Activated CD8-positive, alpha-beta T cell treated with anti-CD3 and anti-CD28 coated beads for 36 hours (primary cell): ENCODE measurements at regions of chr4 and their contacts with region 1.

Region 1: GRCh38 chr4:48033825-48034413 is 17.3 kb downstream of the NIPAL1 start:
- DNase-seq: peak; percentile 88
- ATAC-seq: peak; percentile 72
- H3K4me3 Mint-ChIP-seq: no peak overlapping the region
- H3K27ac Mint-ChIP-seq: no peak overlapping the region
- H3K4me1 Mint-ChIP-seq: peaks cover 60% of the 10 kb centered on the region
- H3K27me3 Mint-ChIP-seq: peaks cover 2% of the 10 kb centered on the region
- CTCF ChIP-seq: peak; percentile 87

Region 2: DNA sequence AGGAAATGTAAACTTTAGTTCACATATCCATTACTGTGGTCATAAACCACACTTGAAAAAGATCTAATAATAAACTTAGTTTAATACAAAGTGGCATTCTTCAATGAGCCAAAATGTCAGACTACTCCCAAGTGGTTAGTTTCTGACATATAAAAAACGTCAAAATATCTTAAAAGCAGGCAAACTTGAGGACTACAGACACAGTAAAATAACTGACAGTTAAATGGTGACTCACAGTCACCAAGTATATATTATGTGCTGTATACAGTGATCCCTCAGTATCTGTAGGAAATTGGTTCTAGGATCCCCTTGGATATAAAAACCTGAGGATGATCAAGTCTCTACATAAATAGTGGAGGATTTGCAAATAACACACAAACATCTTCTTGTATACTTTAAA is 184.5 kb before region 1 on chr4:
- CTCF ChIA-PET with region 1: no interaction called
- POLR2A ChIA-PET with region 1: no interaction called
- intact Hi-C with region 1: no loop called
- DNase-seq: no peak
- ATAC-seq: no peak
- H3K4me3 Mint-ChIP-seq: no peak overlapping the region
- H3K27ac Mint-ChIP-seq: no peak overlapping the region
- H3K4me1 Mint-ChIP-seq: no peaks in the 10 kb centered on the region
- H3K27me3 Mint-ChIP-seq: no peaks in the 10 kb centered on the region
- CTCF ChIP-seq: no peak

Region 3: DNA sequence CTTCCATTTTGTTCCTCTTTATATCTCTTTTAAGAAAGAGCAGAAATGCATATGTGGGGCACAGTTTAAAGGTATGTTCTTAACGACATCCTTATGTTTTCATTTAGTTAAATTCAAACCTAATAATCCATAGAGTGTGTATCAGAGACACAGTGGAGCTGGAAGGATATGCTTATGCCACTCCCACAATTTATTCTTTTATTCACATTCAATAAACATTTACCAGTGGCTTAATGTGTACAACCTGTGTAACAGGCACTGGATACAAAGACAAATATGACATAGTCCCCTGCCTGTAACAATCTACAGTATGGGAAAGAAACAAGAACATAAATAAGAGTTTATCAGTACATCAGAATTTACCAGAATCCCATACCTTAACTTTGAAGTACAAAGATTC is 173.6 kb before region 1 on chr4:
- CTCF ChIA-PET with region 1: no interaction called
- POLR2A ChIA-PET with region 1: no interaction called
- intact Hi-C with region 1: no loop called
- DNase-seq: no peak
- ATAC-seq: no peak
- H3K4me3 Mint-ChIP-seq: no peak overlapping the region
- H3K27ac Mint-ChIP-seq: no peak overlapping the region
- H3K4me1 Mint-ChIP-seq: peaks cover 2% of the 10 kb centered on the region
- H3K27me3 Mint-ChIP-seq: no peaks in the 10 kb centered on the region
- CTCF ChIP-seq: no peak

Region 4: GRCh38 chr4:48016141-48017103 is 17.5 kb before region 1 on chr4 and contains the starts of genes CNGA1 and NIPAL1:
- CTCF ChIA-PET with region 1: interaction called, 44 read pairs
- POLR2A ChIA-PET with region 1: interaction called, 5 read pairs
- intact Hi-C with region 1: no loop called
- DNase-seq: peak; percentile 69
- ATAC-seq: peak; percentile 89
- H3K4me3 Mint-ChIP-seq: peak within 1 kb of the TSS; percentile 79
- H3K27ac Mint-ChIP-seq: peak within 1 kb of the TSS; percentile 42
- H3K4me1 Mint-ChIP-seq: peaks cover 23% of the 10 kb centered on the region
- H3K27me3 Mint-ChIP-seq: peaks cover 17% of the 10 kb centered on the region
- CTCF ChIP-seq: no peak
- total RNA-seq, gene CNGA1: 0.50 TPM in 1 of 2 experiments, not detected in the other
- total RNA-seq, gene NIPAL1: 1.1 to 1.9 TPM

Region 5: GRCh38 chr4:48047421-48047844 is 13.5 kb after region 1 on chr4:
- CTCF ChIA-PET with region 1: interaction called, 86 read pairs
- POLR2A ChIA-PET with region 1: interaction called, 19 read pairs
- intact Hi-C with region 1: loop called (anchors 1 kb)
- DNase-seq: peak; percentile 97
- ATAC-seq: peak; percentile 85
- H3K4me3 Mint-ChIP-seq: peak overlapping the region; percentile 40
- H3K27ac Mint-ChIP-seq: peak overlapping the region; percentile 26
- H3K4me1 Mint-ChIP-seq: peaks cover 60% of the 10 kb centered on the region
- H3K27me3 Mint-ChIP-seq: peaks cover 11% of the 10 kb centered on the region
- CTCF ChIP-seq: no peak

Region 6: DNA sequence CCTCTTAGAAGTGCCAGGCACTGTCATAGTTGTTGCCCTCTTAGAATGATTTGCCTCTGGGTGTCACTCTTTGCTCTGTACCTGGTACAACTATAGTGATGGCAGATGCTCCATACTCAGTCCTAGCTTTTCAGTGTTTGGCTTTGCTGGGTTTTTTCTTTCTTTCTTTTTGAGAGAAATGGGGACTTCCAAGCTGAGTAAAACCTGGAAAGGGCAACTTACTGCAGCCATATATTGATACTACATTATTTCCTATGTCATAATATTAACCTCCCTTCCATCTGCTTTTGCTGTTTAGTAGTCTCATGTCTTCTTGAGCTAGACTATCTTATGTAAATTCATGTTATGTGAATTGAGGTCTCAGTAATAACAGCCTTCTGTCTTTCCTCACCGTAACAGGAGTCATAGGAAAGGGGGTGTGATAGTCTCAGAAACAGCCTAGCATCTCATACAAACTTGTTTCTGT is 31.7 kb after region 1 on chr4:
- CTCF ChIA-PET with region 1: interaction called, 44 read pairs
- POLR2A ChIA-PET with region 1: interaction called, 3 read pairs
- intact Hi-C with region 1: no loop called
- DNase-seq: no peak
- ATAC-seq: peak; percentile 81
- H3K4me3 Mint-ChIP-seq: no peak overlapping the region
- H3K27ac Mint-ChIP-seq: peak overlapping the region; percentile 55
- H3K4me1 Mint-ChIP-seq: peaks cover 34% of the 10 kb centered on the region
- H3K27me3 Mint-ChIP-seq: no peaks in the 10 kb centered on the region
- CTCF ChIP-seq: no peak

Region 7: DNA sequence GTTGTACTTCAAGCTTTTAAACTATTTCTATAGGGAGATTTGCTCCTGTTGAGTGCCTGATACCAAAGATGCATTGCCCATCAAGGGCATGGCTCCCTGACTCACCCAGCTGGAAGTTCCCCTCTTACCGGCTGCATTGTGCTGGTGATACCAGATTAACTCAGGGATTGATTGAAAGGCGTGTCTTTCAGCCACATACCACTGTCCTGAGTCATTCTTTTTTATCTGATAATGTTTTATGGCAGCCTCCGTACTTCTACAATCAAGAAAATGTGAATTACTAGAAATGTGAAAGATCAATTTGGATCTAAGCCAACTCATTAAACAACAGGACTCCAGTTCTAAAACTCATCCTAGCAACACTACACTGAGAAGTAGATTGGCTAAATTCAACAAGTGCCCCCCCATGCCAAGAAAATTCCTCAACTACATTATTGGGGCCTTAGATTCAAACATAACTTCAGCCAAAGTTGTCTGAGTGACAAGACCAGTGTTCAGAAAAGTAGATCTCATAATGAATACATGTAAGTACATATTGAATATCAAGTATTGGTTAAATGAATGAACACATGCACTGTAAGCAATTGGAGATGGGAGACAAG is 60.1 kb after region 1 on chr4:
- CTCF ChIA-PET with region 1: interaction called, 13 read pairs
- POLR2A ChIA-PET with region 1: no interaction called
- intact Hi-C with region 1: loop called (anchors 5 kb)
- DNase-seq: peak; percentile 71
- ATAC-seq: peak; percentile 99
- H3K4me3 Mint-ChIP-seq: no peak overlapping the region
- H3K27ac Mint-ChIP-seq: peak overlapping the region; percentile 65
- H3K4me1 Mint-ChIP-seq: peaks cover 26% of the 10 kb centered on the region
- H3K27me3 Mint-ChIP-seq: no peaks in the 10 kb centered on the region
- CTCF ChIP-seq: no peak

Region 8: GRCh38 chr4:48109413-48110263 is 75.7 kb after region 1 on chr4:
- CTCF ChIA-PET with region 1: interaction called, 12 read pairs
- POLR2A ChIA-PET with region 1: no interaction called
- intact Hi-C with region 1: no loop called
- DNase-seq: no peak
- ATAC-seq: peak; percentile 78
- H3K4me3 Mint-ChIP-seq: no peak overlapping the region
- H3K27ac Mint-ChIP-seq: peak overlapping the region; percentile 65
- H3K4me1 Mint-ChIP-seq: peaks cover 61% of the 10 kb centered on the region
- H3K27me3 Mint-ChIP-seq: no peaks in the 10 kb centered on the region
- CTCF ChIP-seq: peak; percentile 73

Region 9: DNA sequence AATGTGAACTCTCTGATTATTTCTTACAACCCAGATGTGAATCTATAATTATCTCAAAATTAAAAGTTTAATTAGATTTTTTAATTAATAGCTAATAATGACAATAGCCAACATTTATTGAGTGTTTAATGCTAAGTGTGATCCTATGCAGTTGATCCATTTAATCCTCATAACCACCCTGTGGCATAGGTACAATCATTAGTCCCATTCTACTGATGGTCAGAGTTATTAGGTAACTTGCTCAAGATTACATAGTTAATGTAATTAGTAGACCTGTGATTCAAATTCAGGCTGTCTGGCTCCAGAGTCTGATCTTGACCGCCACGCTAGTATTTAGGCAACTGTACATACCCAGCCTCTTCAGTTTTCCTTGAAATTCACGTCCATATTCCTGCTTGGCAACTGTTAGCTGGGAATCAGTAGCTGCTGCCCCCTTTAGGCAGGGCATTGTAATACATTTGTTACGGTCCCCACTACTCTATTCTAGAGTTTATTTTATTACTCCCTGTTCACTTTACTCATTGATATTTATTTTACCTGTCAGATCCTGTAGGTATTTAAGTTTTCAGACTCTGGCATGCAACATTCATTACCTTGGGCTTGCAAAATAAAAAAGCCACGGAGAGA is 256.3 kb after region 1 on chr4:
- CTCF ChIA-PET with region 1: no interaction called
- POLR2A ChIA-PET with region 1: no interaction called
- intact Hi-C with region 1: no loop called
- DNase-seq: peak; percentile 26
- ATAC-seq: peak; percentile 56
- H3K4me3 Mint-ChIP-seq: no peak overlapping the region
- H3K27ac Mint-ChIP-seq: no peak overlapping the region
- H3K4me1 Mint-ChIP-seq: no peaks in the 10 kb centered on the region
- H3K27me3 Mint-ChIP-seq: no peaks in the 10 kb centered on the region
- CTCF ChIP-seq: peak; percentile 85